GM18951 (cell line): ENCODE measurements at regions of chr4 and their contacts with region 1.

Region 1: DNA sequence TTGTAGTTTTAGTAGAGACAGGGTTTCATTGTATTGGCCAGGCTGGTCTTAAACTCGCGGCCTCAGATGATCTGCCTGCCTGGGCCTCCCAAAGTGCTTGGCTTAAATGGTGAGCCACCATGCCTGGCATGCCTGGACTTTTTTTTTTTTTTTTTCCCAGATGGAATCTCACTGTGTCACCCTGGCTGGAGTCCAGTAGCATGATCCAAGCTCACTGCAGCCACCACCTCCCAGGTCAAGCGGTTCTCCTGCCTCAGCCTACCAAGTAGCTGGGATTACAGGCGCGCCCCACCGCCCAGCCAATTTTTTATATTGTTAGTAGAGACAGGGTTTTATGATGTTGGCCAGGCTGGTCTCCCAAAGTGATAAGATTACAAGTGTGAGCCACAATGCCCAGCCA is 8.4 kb downstream of the UBE2K start:
- POLR2A ChIP-seq: no peak

Region 2: DNA sequence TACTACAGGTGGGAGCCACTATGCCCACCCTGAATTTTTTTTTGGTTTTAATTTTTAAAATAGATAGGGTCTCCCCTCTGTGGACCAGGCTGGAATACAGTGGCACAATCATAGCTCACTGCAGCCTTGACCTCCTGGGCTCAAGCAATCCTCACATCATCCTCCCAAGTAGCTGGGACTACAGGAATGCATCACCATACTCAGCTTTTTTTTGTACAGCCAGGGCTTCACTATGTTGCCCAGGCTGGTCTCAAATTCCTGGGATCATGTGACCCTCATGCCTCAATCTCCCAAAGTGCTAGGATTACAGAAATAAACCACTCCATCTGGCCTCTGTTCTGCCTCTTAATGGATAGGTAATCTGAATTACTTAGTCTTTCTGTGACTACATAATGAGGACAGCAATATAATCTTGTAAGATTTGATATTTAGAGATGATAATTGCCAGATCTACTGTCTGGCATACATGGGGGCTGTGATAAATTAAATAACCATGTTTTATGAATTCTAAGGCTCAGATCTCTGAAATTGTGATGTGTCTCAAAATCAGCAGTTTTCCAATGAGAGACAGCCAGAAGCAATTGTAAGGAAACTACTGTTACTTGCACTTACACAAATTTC is 244.6 kb after region 1 on chr4:
- in situ Hi-C with region 1: loop called (anchors 10 kb)
- POLR2A ChIP-seq: no peak